Breast epithelium (tissue), 4 donors: ENCODE measurements at regions of chr12 and their contacts with region 1.

Region 1: DNA sequence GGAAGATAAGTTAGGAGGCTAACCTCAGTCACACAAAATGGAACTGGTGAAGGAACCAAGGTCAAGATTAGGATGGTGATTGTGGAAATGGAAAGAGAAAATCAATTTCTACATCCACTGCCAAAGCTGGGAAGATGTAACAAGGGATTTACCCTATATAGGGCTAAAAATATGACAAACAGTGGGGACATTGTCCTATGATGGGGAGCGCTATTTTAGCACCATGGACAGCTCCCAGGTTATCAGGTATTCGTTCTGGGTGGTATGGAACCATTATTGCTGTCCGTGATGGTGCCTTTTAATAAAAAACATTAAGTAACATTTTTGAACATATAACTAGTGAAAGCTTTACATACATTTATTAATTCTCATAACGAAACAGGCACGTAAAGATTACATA is 124.0 kb downstream of the NDUFA12 start:
- DNase-seq: no peak
- H3K4me3 ChIP-seq: no peak overlapping the region
- H3K27ac ChIP-seq: no peak overlapping the region
- H3K4me1 ChIP-seq: no peaks in the 10 kb centered on the region
- H3K27me3 ChIP-seq: no peaks in the 10 kb centered on the region
- CTCF ChIP-seq: no peak
- POLR2A ChIP-seq: no peak

Region 2: DNA sequence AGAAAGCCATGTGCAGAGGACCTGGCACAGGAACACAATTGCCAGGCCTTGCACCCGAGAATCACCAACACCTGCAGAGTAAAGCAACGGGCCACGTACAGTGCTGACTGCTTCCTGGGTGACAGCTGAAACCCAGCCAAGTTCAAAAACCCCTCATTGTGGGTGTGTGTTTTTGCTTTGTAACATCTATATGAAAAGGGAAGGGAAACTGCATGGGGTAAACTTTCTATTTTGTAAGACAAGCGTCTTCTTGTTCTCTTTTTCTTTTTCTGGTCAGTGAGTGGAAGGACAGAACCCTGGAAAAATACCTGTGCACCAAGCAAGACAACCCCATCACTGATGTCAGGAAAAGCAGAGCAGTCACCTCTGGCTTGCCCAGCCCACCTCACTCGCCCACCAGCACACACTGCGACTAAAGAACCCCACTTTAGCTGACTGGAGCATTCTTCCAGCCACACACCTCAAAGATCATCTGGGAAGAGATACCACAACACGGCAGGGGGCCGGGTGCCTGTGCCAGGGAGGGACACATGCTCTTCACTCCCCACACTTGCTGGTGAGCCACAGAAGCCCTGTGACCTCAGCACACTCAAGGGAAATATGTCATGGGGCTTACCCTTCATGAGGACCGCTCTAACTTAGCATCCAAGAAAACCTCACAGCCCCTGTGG is 48.3 kb before region 1 on chr12:
- intact Hi-C with region 1: loop called (anchors 2 kb)
- DNase-seq: no peak
- H3K4me3 ChIP-seq: no peak overlapping the region
- H3K27ac ChIP-seq: no peak overlapping the region
- H3K4me1 ChIP-seq: no peaks in the 10 kb centered on the region
- H3K27me3 ChIP-seq: no peaks in the 10 kb centered on the region
- CTCF ChIP-seq: no peak
- POLR2A ChIP-seq: no peak

Region 3: DNA sequence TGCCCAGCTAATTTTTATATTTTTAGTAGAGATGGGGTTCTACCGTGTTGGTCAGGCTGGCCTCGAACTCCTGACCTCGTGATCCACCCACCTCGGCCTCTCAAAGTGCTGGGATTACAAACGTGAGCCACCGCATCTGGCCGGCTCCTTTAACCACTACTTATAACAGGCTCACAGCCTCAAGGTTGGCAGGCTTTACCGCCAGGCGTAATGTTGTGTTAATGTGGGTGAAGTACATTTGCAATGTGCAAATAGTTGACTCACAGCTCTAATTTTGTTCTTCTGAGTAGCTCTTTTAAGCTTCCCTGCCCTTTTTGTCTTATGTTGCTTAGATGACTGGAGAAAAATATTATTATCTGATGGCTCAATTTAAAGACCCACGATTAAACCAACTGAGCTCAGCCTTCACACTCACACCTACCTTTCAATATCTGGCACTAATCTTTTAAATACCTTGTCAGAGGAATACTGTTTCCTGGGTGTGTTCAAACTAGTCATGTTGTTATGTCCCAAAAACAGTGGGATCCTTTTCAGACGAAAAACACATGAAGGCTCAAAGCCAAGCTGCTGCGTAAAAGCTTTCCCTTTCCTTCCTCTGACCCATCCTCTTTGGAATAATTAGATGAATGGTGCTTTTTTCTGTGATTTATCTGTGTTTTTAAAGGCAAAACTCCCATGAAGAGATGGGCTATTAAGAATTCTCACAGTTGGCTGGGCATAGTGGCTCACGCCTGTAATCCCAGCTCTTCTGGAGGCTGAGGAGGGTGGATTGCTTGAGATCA is 728.9 kb after region 1 on chr12:
- intact Hi-C with region 1: no loop called
- DNase-seq: peak in 1 of 2 donors; percentile 67
- H3K4me3 ChIP-seq: no peak overlapping the region
- H3K27ac ChIP-seq: peak overlapping the region; percentile 52 to 68
- H3K4me1 ChIP-seq: no peaks in the 10 kb centered on the region
- H3K27me3 ChIP-seq: no peaks in the 10 kb centered on the region
- CTCF ChIP-seq: no peak
- POLR2A ChIP-seq: no peak